ENCODE measurements at regions of chr11 and their contacts with region 1.

Region 1: GRCh38 chr11:66001942-66002647 is at the starts of genes BANF1 and EIF1AD:
- DNase-seq: peak; percentile 98
- H3K4me3 Mint-ChIP-seq: peak within 1 kb of the TSS; percentile 100
- H3K27ac Mint-ChIP-seq: peak within 1 kb of the TSS; percentile 99
- H3K4me1 Mint-ChIP-seq: peaks cover 28% of the 10 kb centered on the region
- H3K27me3 Mint-ChIP-seq: no peaks in the 10 kb centered on the region
- total RNA-seq, gene BANF1: 291 and 298 TPM in 2 replicates
- total RNA-seq, gene EIF1AD: 64.9 and 75.9 TPM in 2 replicates

Region 2: GRCh38 chr11:65615229-65615941 is 386.7 kb before region 1 on chr11 and contains the start of gene PCNX3:
- intact Hi-C with region 1: loop called (anchors 1 kb)
- DNase-seq: peak; percentile 100
- H3K4me3 Mint-ChIP-seq: peak within 1 kb of the TSS; percentile 97
- H3K27ac Mint-ChIP-seq: peak within 1 kb of the TSS; percentile 93
- H3K4me1 Mint-ChIP-seq: peaks cover 34% of the 10 kb centered on the region
- H3K27me3 Mint-ChIP-seq: peaks cover 3% of the 10 kb centered on the region
- total RNA-seq, gene PCNX3: 52.0 and 55.1 TPM in 2 replicates

Region 3: GRCh38 chr11:65711785-65712632 is 290.1 kb before region 1 on chr11 and contains the start of gene KAT5:
- intact Hi-C with region 1: loop called (anchors 1 kb)
- DNase-seq: peak; percentile 99
- H3K4me3 Mint-ChIP-seq: peak within 1 kb of the TSS; percentile 93
- H3K27ac Mint-ChIP-seq: peak within 1 kb of the TSS; percentile 99
- H3K4me1 Mint-ChIP-seq: peaks cover 22% of the 10 kb centered on the region
- H3K27me3 Mint-ChIP-seq: no peaks in the 10 kb centered on the region
- total RNA-seq, gene KAT5: 71.6 and 72.3 TPM in 2 replicates

Region 4: GRCh38 chr11:65961232-65961901 is 40.7 kb before region 1 on chr11 and contains the start of gene SART1:
- intact Hi-C with region 1: loop called (anchors 1 kb)
- DNase-seq: peak; percentile 99
- H3K4me3 Mint-ChIP-seq: peak within 1 kb of the TSS; percentile 90
- H3K27ac Mint-ChIP-seq: peak within 1 kb of the TSS; percentile 95
- H3K4me1 Mint-ChIP-seq: peaks cover 42% of the 10 kb centered on the region
- H3K27me3 Mint-ChIP-seq: peaks cover 1% of the 10 kb centered on the region
- total RNA-seq, gene SART1: 99.1 and 104 TPM in 2 replicates

Region 5: DNA sequence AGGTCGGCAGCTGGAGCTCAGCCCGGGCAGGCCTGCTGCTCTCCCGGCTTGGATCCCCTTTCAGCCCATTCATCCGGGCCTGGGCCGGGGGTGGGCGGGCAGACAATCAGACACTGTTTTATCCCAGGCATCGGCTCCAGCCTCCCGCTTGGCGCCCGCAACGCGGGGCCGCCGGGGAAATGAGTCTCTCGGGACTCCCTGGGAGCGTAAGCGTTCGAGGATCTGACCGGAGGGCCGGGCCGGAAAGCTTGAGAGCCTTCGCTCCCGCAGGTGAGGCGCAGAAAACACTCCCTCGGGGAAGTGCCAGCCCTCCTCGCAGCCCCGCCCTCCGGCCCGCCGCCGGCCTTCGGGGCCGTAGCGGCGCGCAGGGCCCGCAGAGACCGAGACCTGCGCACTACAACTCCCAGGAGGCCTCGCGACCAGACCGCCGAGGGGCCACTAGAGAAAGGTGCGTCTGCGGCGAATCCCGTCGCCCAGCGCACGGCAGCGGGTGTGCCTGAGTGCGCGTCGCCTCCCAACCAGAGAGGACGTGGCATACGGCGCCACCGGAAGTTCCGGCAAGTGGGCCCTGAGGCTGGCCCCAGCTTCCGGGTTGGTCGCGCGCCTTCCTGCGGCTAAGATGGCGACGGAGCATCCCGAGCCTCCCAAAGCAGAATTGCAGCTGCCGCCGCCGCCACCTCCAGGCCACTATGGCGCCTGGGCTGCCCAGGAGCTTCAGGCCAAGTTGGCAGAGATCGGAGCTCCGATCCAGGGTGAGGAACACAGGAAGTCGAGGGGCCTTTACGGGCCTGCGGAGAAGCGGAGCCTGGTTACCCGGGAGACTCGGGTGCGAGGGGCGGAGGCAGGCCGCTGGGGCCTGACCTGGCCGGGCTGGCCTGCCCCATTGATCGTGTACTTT is 49.9 kb after region 1 on chr11 and contains the start of gene SF3B2:
- intact Hi-C with region 1: loop called (anchors 1 kb)
- DNase-seq: peak; percentile 99
- H3K4me3 Mint-ChIP-seq: peak within 1 kb of the TSS; percentile 88
- H3K27ac Mint-ChIP-seq: peak within 1 kb of the TSS; percentile 97
- H3K4me1 Mint-ChIP-seq: peaks cover 21% of the 10 kb centered on the region
- H3K27me3 Mint-ChIP-seq: peaks cover 6% of the 10 kb centered on the region
- total RNA-seq, gene SF3B2: 283 and 284 TPM in 2 replicates

Measured in activated CD4-positive, alpha-beta T cell treated with anti-CD3 and anti-CD28 coated beads, Interleukin-2, amount 10 ng/mL, durations not matched to agents 24 days and 14 days (primary cell).